Activated CD4-positive, alpha-beta memory T cell treated with anti-CD3 and anti-CD28 coated beads, Interleukin-2, amount 10 ng/mL, durations not matched to agents 7 days and 5 days (primary cell): ENCODE measurements at regions of chr1 and their contacts with region 1.

Region 1: DNA sequence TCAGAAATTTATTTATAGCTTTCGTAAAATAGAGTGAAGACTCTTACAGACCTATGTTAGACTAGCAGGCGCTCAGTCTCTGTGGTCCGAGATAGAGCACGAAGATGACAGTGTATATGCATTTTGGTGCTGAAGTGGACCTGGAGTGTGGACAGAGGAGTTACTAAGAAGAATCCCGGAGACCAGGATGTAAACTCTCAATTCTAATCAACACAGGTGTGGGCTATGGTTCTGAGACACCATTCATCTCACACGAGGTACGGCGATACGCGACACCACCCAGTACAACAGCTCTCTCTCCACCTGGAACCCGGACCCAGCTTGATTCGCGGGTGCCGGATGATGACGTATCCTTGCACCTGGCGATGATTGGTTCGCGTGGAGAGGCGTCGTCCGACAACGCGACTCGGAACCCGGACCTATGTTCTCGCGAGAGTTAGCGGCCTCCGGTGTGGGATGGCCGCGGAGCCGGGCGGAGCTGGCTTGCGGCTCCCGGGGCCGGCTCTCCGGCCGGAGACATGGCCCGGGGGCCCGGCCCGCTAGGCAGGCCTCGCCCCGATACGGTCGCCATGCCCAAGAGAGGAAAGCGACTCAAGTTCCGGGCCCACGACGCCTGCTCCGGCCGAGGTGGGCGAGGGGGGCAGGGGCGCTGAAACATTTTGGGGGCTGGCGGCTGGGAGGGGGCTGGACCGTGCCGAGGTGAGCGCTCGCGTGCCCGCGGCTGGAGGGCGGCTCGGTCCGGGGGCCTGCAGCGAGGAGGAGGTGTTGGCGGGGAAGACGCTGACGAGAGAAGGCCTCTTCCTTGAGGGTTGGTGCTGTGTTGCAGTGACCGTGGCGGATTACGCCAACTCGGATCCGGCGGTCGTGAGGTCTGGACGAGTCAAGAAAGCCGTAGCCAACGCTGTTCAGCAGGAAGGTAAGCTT is at the start of gene TMEM183A:
- DNase-seq: peak; percentile 97
- H3K4me3 Mint-ChIP-seq: peak within 1 kb of the TSS; percentile 92
- H3K27ac Mint-ChIP-seq: peak within 1 kb of the TSS; percentile 97
- H3K4me1 Mint-ChIP-seq: peaks cover 33% of the 10 kb centered on the region
- H3K27me3 Mint-ChIP-seq: no peaks in the 10 kb centered on the region
- total RNA-seq, gene TMEM183A: 69.1 to 72.6 TPM

Region 2: DNA sequence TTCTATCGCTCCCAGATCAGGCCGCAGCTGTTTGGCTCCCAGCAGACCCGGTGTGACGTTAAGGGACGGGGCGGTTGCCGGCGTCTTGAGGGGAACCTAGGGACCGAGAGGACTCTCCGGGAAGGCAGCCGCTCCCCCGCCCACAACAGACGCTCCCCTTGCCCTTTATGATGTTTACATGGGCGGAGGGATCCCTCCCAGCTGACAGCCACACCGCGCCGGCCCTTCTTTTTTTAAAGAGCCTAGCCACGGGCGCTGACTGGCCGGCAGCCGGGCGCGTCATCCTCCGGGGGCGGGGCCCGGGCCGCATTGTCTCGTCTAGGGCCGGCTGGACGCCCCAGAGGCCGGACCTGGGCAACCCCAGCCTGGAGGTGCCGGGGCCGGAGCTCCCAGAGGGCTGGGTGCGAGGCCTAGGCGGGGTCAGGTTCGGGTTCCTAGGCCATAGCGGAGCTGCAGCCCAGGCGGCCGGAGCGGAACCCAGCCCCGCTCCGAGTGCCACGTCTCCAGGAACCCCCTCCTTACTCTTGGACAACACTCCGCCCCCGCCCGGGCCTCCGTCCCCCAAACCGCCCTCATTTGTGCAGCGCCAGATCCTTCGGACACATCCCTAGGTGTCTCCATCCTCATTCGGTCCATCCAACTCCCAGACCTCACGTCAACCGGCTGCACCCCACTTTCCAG is 196.5 kb before region 1 on chr1 and contains the start of gene PCAT6:
- CTCF ChIA-PET with region 1: no interaction called
- POLR2A ChIA-PET with region 1: interaction called, 10 read pairs
- DNase-seq: peak; percentile 91
- H3K4me3 Mint-ChIP-seq: peak within 1 kb of the TSS; percentile 98
- H3K27ac Mint-ChIP-seq: peak within 1 kb of the TSS; percentile 74
- H3K4me1 Mint-ChIP-seq: peaks cover 42% of the 10 kb centered on the region
- H3K27me3 Mint-ChIP-seq: peaks cover 27% of the 10 kb centered on the region
- total RNA-seq, gene PCAT6: 1.9 to 2.7 TPM

Region 3: GRCh38 chr1:202861420-202862200 is 145.6 kb before region 1 on chr1:
- CTCF ChIA-PET with region 1: no interaction called
- POLR2A ChIA-PET with region 1: no interaction called
- DNase-seq: peak; percentile 46
- H3K4me3 Mint-ChIP-seq: peak overlapping the region; percentile 54
- H3K27ac Mint-ChIP-seq: no peak overlapping the region
- H3K4me1 Mint-ChIP-seq: peaks cover 10% of the 10 kb centered on the region
- H3K27me3 Mint-ChIP-seq: peaks cover 64% of the 10 kb centered on the region

Region 4: DNA sequence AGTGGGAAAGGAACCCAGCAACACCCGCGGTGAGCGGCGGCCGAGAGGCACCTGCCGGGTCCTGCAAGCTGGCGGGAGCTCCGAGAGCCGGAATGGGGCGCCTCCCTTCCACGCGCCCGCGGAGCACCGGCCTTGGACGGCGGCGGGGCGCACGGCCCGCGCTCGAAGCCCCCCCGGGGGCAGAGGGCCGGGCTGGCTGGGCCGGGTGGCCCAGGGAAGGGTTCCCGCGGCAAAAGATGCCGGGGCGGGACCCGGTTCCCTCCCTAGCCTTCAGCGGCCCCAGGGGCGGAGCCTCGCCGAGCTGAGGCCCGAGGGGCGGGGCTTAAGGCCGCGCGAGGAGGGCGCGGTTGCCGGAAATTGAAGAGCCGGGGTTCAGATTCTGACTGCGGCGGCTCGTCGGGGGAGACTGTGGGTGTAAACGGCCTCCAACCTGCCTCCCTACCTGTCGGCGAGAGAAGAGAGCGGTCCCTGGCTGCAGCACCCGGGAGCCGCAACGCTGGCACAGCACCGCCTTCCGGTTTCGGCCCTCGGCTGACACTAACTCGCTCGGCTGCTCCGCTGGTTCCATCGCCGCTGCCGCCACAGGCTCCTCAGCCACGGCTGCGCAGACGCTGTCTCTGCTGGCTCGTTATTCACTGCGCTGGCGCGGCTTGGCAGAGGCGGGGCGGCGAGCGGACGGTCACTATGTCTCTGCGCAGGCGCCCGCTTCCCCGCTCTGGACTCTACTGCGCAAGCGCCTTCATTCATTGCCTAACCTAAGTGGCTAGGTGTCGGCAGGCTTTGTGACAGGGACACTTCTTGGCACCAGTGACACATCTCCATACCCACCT is 118.5 kb before region 1 on chr1 and contains the start of gene RABIF:
- CTCF ChIA-PET with region 1: interaction called, 4 read pairs
- POLR2A ChIA-PET with region 1: interaction called, 17 read pairs
- DNase-seq: peak; percentile 97
- H3K4me3 Mint-ChIP-seq: peak within 1 kb of the TSS; percentile 94
- H3K27ac Mint-ChIP-seq: peak within 1 kb of the TSS; percentile 99
- H3K4me1 Mint-ChIP-seq: peaks cover 33% of the 10 kb centered on the region
- H3K27me3 Mint-ChIP-seq: no peaks in the 10 kb centered on the region
- total RNA-seq, gene RABIF: 12.9 to 13.1 TPM

Region 5: DNA sequence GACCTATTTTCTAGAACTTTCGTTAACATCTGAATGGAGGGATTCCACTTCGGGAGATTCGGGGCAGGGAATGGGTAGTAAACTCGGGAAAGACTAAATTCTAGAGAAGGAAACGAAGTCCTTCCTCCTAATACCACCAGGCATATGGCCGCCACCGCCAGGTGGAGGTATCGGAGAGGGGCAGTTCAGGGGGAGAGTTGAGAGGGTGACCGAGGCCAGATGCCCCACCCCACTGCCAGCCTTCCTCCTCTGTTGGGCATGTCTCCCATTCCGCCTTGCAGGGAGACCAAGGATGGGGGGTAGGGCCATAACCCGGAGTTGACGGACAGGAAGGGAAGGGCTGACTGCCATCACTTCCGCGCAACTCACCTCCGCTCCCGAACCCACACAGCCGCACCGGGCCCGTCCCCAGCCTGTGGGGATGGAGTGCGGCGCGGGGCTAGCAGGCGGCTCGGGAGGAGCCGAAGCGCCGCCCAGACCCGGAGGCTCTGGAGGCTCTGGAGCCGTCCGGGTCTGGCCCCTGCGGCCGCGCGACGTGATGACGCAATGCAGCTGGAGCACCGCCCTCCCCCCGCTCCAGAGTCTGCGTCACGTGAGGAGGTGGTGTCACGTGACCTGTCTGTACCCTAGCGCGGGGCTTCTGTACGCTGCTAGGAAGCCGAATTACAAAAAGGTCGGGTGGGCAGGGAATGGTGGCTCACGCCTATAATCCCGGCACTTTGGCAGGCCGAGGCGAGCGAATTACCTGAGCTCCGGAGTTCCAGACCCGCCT is 80.3 kb before region 1 on chr1 and contains the start of gene KLHL12:
- CTCF ChIA-PET with region 1: no interaction called
- POLR2A ChIA-PET with region 1: interaction called, 13 read pairs
- DNase-seq: peak; percentile 96
- H3K4me3 Mint-ChIP-seq: peak within 1 kb of the TSS; percentile 94
- H3K27ac Mint-ChIP-seq: peak within 1 kb of the TSS; percentile 87
- H3K4me1 Mint-ChIP-seq: peaks cover 33% of the 10 kb centered on the region
- H3K27me3 Mint-ChIP-seq: peaks cover 8% of the 10 kb centered on the region
- total RNA-seq, gene KLHL12: 27.1 to 28.9 TPM

Region 6: GRCh38 chr1:202968840-202969295 is 38.3 kb before region 1 on chr1:
- CTCF ChIA-PET with region 1: interaction called, 5 read pairs
- POLR2A ChIA-PET with region 1: interaction called, 31 read pairs
- DNase-seq: peak; percentile 29
- H3K4me3 Mint-ChIP-seq: no peak overlapping the region
- H3K27ac Mint-ChIP-seq: no peak overlapping the region
- H3K4me1 Mint-ChIP-seq: peaks cover 29% of the 10 kb centered on the region
- H3K27me3 Mint-ChIP-seq: peaks cover 6% of the 10 kb centered on the region

Region 7: GRCh38 chr1:203026031-203026989 is 19.1 kb after region 1 on chr1 and contains the start of gene PPFIA4:
- CTCF ChIA-PET with region 1: interaction called, 5 read pairs
- POLR2A ChIA-PET with region 1: interaction called, 27 read pairs
- DNase-seq: peak; percentile 92
- H3K4me3 Mint-ChIP-seq: peak within 1 kb of the TSS; percentile 73
- H3K27ac Mint-ChIP-seq: peak within 1 kb of the TSS; percentile 52
- H3K4me1 Mint-ChIP-seq: peaks cover 22% of the 10 kb centered on the region
- H3K27me3 Mint-ChIP-seq: peaks cover 14% of the 10 kb centered on the region
- total RNA-seq, gene PPFIA4: 28.9 to 29.3 TPM